Testis (tissue), 5 donors: ENCODE measurements at regions of chr10 and their contacts with region 1.

Region 1: DNA sequence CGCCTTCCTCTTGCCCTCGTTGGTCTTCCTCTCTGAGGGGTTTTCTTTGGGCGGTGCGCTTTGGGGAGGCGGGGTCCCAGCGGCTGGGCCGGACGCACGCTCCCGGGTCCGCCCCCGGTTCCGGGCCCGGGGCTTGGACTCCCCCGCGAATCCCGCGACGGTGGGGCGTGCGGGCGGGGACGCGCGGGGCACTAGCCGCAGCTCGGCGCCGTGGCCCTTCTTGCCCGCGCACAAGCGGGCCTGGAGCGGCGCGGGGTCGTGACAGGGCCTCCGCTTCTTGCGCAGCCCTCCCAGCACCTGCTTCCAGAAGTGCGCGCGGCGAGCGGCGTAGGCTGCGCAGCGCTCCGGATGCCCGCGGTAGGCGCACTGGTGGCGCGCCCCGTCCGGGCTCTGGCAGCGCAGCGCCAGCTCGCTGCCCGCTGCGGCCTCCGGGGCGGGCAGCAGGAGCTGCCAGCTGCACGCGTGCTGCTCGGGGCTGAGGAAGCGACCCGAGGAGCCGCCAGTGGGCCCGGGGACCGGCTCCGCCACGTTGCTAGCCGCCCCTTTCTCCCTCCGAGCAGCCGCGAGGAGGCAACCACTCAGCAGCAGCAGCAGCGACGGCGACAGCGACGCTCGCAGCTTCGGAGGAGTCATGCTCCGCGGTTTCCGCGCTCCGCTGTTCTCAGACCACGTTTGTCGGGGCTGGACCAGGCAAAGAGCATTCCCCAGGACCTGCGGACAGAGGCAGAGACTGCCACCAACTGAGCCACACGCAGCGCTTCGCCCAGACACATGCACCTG is 759 bp downstream of the FGFBP3 start:
- DNase-seq: peak; percentile 83
- H3K4me3 ChIP-seq: peak overlapping the region; percentile 75 to 82
- H3K27ac ChIP-seq: peak overlapping the region in 1 of 2 donors; percentile 52
- H3K4me1 ChIP-seq: peaks cover 7% of the 10 kb centered on the region
- H3K27me3 ChIP-seq: no peaks in the 10 kb centered on the region
- CTCF ChIP-seq: peak in 1 of 3 experiments; percentile 21
- POLR2A ChIP-seq: no peak

Region 2: DNA sequence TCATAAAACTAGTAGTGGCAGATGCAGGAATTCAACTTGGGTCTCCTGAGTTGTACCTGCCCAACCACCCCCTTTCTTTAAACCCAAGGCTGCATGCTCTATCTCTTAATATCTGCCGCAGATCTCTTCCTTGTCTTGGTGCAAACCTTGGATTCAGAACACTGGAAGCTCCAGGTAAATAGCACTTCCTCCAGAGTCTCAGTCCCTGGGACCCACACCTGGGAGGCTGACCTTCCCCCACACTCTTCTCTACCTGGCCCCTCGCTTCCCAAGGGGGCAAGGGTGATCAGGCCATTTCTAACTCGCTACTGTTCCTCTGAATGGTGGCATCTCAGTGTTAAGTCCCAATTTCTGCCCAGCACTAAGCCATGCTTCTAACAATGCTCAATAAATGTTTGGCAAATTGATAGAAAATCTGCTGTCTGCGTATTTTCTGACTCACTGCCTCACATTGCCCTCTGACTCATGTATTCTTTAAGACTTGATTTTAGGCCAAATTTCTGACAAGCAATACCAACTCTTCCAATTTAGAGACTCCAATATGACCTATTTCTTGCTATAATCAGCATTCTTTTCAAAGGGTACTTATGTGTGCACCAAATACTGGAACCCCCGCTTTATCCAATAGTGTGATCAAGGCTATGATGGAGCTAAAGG is 207.6 kb before region 1 on chr10:
- intact Hi-C with region 1: no loop called
- DNase-seq: no peak
- H3K4me3 ChIP-seq: no peak overlapping the region
- H3K27ac ChIP-seq: no peak overlapping the region
- H3K4me1 ChIP-seq: no peaks in the 10 kb centered on the region
- H3K27me3 ChIP-seq: no peaks in the 10 kb centered on the region
- CTCF ChIP-seq: no peak
- POLR2A ChIP-seq: no peak

Region 3: GRCh38 chr10:91758303-91759146 is 150.0 kb before region 1 on chr10:
- intact Hi-C with region 1: loop called (anchors 5 kb)
- DNase-seq: no peak
- H3K4me3 ChIP-seq: no peak overlapping the region
- H3K27ac ChIP-seq: no peak overlapping the region
- H3K4me1 ChIP-seq: no peaks in the 10 kb centered on the region
- H3K27me3 ChIP-seq: no peaks in the 10 kb centered on the region
- CTCF ChIP-seq: peak in 2 of 3 experiments; percentile 21 to 28
- POLR2A ChIP-seq: no peak

Region 4: DNA sequence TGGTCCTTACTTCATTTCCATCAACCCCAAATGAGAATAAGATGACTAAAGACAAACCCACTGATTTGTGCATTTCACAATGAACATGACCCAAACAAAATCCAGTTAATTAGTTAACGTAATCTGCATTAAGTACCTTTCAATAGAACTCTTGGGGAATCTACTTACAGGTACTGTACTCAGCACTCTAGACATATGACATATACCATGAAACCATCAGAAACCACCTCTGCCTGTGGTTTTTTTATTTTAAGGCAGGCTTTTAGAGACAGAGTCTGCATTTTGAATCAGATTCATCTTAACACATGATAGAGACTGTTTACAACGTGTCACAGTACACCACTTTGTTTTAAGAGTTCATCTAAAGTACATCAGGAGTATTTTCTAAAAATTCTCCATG is 183.4 kb after region 1 on chr10:
- intact Hi-C with region 1: no loop called
- DNase-seq: no peak
- H3K4me3 ChIP-seq: no peak overlapping the region
- H3K27ac ChIP-seq: no peak overlapping the region
- H3K4me1 ChIP-seq: no peaks in the 10 kb centered on the region
- H3K27me3 ChIP-seq: no peaks in the 10 kb centered on the region
- CTCF ChIP-seq: no peak
- POLR2A ChIP-seq: no peak

Region 5: GRCh38 chr10:92177546-92177945 is 269.0 kb after region 1 on chr10:
- intact Hi-C with region 1: no loop called
- DNase-seq: no peak
- H3K4me3 ChIP-seq: no peak overlapping the region
- H3K27ac ChIP-seq: no peak overlapping the region
- H3K4me1 ChIP-seq: no peaks in the 10 kb centered on the region
- H3K27me3 ChIP-seq: no peaks in the 10 kb centered on the region
- CTCF ChIP-seq: no peak
- POLR2A ChIP-seq: no peak